GM18951 (cell line): ENCODE measurements at regions of chr11 and their contacts with region 1.

Region 1: DNA sequence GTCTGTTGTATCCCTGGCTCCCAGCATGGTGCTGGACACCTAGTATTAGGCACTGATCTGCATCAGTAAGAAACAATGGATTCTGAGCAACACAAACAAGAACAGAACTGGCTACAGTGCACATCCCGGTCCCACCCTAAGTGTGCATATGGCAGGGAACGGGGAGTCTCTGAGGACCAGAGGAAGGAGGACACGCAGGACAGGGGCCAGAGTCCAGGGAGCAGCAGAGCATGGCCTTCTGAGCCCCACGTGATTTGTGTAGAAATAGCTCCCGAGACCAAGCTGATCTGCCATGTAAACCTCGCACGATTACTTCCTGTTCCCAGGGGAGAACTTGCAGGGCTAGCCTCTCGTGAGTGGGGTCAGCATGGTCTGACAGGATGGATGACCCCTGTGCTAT is 12.6 kb upstream of the SNX32 start:
- POLR2A ChIP-seq: no peak

Region 2: GRCh38 chr11:65720237-65720934 is 100.7 kb before region 1 on chr11 and contains the start of gene RNASEH2C:
- in situ Hi-C with region 1: loop called (anchors 10 kb)
- POLR2A ChIP-seq: peak; percentile 91

Region 3: DNA sequence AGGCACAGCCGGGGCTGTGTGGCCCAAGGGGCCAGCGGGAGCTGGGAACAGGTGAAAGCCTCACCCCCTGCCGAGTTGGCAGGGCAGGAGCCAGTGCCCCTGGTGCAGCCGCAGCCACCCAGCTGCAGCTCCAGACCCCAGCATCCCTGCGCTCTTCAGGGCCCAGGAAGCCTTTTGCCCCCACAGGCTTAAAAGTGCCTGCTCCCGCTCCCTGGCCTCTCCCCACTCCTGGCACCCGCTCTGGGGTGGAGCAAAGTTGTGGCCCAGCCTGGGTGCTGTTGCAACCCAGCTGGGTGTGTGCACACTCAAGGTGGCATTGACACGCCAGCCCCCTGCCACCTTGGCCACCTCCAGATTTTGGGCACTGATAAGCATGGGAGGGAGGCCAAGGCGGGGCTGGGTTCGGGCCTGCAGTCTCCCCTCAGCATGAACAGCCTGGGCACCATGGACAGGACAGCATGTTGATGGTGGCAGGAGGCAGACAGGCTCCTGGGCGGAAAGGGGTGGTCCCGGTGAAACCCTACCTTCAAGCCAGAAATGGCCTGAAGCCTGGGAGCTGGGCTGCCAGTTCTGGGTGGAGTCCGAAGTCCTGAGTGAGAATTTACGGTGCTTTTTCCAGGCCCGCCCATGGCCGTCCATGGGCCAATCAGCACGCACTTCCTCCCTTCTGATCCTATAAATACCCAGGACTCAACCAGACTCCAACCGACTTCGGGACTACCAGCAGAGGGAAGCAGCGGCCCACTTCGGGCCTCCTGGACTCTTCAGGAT is 77.0 kb before region 1 on chr11:
- in situ Hi-C with region 1: no loop called
- POLR2A ChIP-seq: no peak